CD8-positive, alpha-beta T cell (primary cell): ENCODE measurements at regions of chr11 and their contacts with region 1.

Region 1: DNA sequence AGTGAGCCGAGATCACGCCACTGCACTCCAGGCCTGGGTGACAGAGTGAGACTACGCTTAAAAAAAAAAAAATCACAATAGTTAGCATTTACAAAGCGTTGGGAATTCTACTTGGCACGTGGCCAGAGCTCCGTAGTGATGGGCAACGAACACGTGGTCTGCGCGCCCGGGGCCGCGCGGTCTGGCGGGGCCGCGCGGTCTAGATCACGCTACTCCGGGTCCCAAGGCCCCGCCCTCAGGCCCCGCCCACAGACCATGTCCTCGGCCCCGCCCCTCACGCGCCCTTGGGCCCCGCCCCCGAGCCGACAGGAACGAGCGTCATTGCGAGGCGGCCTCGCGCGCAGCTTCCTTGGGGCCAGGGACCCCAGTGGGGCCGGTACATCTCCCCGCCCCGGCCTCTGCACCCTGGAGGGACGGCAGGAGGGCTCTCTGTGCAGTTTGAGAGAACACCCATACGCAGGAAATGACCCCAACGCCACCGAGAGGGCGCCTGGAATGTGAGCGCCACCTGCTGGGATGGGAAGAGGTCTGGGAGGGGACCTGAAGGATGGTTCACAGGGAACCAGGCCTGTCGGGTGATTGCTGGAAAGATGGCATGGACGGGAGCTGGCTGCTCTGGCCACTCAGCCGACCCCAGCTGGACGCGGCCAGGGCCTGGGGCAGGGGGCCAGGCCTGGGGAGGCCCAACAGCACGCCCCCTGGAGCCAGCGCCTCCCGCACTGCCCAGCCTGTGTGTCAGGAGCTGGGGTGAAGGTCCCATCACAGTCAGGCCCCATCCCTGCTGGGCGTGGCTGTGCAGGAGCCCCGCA is 2.0 kb upstream of the PTDSS2 start:
- DNase-seq: peak; percentile 92 to 97 (median 94)
- ATAC-seq: peak; percentile 74
- H3K4me3 ChIP-seq: peak overlapping the region; percentile 43 to 69
- H3K4me3 Mint-ChIP-seq: peak overlapping the region; percentile 86
- H3K27ac ChIP-seq: peak overlapping the region; percentile 73 to 94
- H3K27ac Mint-ChIP-seq: peak overlapping the region; percentile 94
- H3K4me1 ChIP-seq: peaks cover 29% of the 10 kb centered on the region
- H3K4me1 Mint-ChIP-seq: peaks cover 19% of the 10 kb centered on the region
- H3K27me3 ChIP-seq: peaks cover 0 to 2% of the 10 kb centered on the region in 2 experiments
- H3K27me3 Mint-ChIP-seq: no peaks in the 10 kb centered on the region
- CTCF ChIP-seq: peak; percentile 68

Region 2: GRCh38 chr11:250740-251299 is 197.3 kb before region 1 on chr11:
- CTCF ChIA-PET with region 1: interaction called, 51 read pairs
- POLR2A ChIA-PET with region 1: interaction called, 3 read pairs
- intact Hi-C with region 1: loop called in 1 of 2 experiments (anchors 1 kb)
- DNase-seq: peak; percentile 75 to 89 (median 85)
- ATAC-seq: peak; percentile 99
- H3K4me3 ChIP-seq: no peak overlapping the region
- H3K4me3 Mint-ChIP-seq: peak overlapping the region; percentile 31
- H3K27ac ChIP-seq: peak overlapping the region in 1 of 2 experiments; percentile 10
- H3K27ac Mint-ChIP-seq: peak overlapping the region; percentile 92
- H3K4me1 ChIP-seq: peaks cover 5% of the 10 kb centered on the region
- H3K4me1 Mint-ChIP-seq: peaks cover 15% of the 10 kb centered on the region
- H3K27me3 ChIP-seq: no peaks in the 10 kb centered on the region
- H3K27me3 Mint-ChIP-seq: no peaks in the 10 kb centered on the region
- CTCF ChIP-seq: peak; percentile 77

Region 3: GRCh38 chr11:304915-305843 is 142.9 kb before region 1 on chr11:
- CTCF ChIA-PET with region 1: interaction called, 19 read pairs
- POLR2A ChIA-PET with region 1: interaction called, 3 read pairs
- intact Hi-C with region 1: loop called (anchors 1 to 2 kb)
- DNase-seq: peak in 6 of 9 experiments; percentile 55 to 84 (median 72)
- ATAC-seq: peak; percentile 30
- H3K4me3 ChIP-seq: no peak overlapping the region
- H3K4me3 Mint-ChIP-seq: peak overlapping the region; percentile 5
- H3K27ac ChIP-seq: peak overlapping the region in 1 of 2 experiments; percentile 40
- H3K27ac Mint-ChIP-seq: peak overlapping the region; percentile 43
- H3K4me1 ChIP-seq: peaks cover 59% of the 10 kb centered on the region
- H3K4me1 Mint-ChIP-seq: peaks cover 58% of the 10 kb centered on the region
- H3K27me3 ChIP-seq: no peaks in the 10 kb centered on the region
- H3K27me3 Mint-ChIP-seq: no peaks in the 10 kb centered on the region
- CTCF ChIP-seq: peak; percentile 75

Region 4: DNA sequence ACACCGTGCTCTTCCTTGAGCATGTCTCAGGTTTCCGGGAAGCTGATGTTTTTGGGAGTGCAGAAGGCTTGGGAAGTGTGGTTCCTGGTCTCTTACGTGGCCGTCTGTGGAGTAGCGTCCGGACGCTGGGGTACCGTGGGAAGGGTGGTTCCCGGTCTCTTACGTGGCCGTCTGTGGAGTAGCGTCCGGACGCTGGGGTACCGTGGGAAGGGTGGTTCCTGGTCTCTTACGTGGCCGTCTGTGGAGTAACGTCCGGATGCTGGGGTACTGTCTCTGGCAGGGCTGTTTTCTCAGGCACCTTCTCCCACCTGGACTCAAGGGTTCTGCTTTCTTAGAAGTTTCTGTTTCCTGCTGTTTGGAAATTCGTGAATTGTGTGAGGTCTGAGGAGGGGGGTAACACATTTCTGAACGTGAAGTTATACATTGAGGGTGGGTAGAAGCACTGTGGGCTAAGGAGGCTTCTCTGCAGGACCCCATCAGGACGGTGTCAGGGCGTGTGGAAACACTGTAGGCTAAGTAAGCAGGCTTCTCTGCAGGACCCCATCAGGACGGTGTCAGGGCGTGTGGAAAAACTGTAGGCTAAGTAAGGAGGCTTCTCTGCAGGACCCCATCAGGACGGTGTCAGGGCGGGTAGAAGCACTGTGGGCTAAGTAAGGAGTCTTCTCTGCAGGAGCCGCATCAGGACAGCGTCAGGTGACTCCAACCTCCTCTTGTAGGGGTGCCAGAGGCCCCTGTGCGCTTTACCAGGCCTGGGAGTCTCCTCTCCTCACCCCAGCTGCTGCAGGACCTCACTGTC is 122.1 kb before region 1 on chr11:
- CTCF ChIA-PET with region 1: no interaction called
- POLR2A ChIA-PET with region 1: no interaction called
- intact Hi-C with region 1: no loop called
- DNase-seq: peak in 1 of 9 experiments; percentile 12
- ATAC-seq: peak; percentile 11
- H3K4me3 ChIP-seq: peak overlapping the region; percentile 6 to 9
- H3K4me3 Mint-ChIP-seq: peak overlapping the region; percentile 56
- H3K27ac ChIP-seq: peak overlapping the region; percentile 69 to 81
- H3K27ac Mint-ChIP-seq: peak overlapping the region; percentile 95
- H3K4me1 ChIP-seq: peaks cover 75% of the 10 kb centered on the region
- H3K4me1 Mint-ChIP-seq: peaks cover 66% of the 10 kb centered on the region
- H3K27me3 ChIP-seq: no peaks in the 10 kb centered on the region
- H3K27me3 Mint-ChIP-seq: no peaks in the 10 kb centered on the region
- CTCF ChIP-seq: no peak

Region 5: DNA sequence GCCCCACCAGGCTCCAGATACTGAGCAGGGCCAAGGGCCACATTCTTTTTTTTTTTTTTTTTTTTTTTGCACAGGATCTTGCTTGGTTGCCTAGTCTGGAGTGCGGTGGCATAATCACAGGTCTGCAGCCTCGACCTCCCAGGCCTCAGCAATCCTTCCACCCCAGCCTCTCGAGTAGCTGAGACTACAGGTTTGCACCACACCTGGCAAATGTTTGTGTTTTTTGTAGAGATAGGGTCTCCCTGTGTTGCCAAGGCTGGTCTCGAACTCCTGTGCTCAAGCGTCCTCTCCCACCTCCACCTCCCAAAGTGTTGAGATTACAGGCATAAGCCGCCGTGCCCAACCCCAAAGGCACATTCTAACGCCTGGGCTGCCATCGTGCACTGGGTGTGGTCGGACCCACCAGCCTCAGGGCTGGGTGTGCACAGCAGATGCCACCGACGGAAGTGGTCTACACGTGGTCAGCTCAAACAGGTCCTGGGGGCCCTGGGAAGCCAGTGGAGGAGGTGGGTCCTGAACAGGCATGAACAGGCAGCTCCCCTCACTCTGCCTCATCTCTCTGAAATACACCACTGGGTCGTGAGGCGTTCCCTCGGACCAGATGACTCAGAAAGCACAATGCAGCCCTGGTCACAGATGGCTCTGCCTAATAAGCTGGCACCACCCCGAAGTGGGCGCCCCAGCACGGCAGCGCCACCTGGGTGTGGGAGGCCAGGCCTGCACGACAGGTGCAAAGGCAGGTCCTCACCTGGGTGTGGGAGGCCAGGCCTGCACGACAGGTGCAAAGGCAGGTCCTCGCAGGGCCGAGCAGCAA is 84.0 kb before region 1 on chr11:
- CTCF ChIA-PET with region 1: interaction called, 35 read pairs
- POLR2A ChIA-PET with region 1: no interaction called
- intact Hi-C with region 1: loop called (anchors 2 to 5 kb)
- DNase-seq: peak; percentile 45 to 83 (median 67)
- ATAC-seq: peak; percentile 86
- H3K4me3 ChIP-seq: no peak overlapping the region
- H3K4me3 Mint-ChIP-seq: no peak overlapping the region
- H3K27ac ChIP-seq: peak overlapping the region in 1 of 2 experiments; percentile 21
- H3K27ac Mint-ChIP-seq: no peak overlapping the region
- H3K4me1 ChIP-seq: peaks cover 11% of the 10 kb centered on the region
- H3K4me1 Mint-ChIP-seq: peaks cover 21% of the 10 kb centered on the region
- H3K27me3 ChIP-seq: peaks cover 11 to 17% of the 10 kb centered on the region in 2 experiments
- H3K27me3 Mint-ChIP-seq: peaks cover 27% of the 10 kb centered on the region
- CTCF ChIP-seq: peak; percentile 49

Region 6: GRCh38 chr11:416757-417621 is 31.1 kb before region 1 on chr11:
- CTCF ChIA-PET with region 1: interaction called, 65 read pairs
- POLR2A ChIA-PET with region 1: interaction called, 58 read pairs
- intact Hi-C with region 1: loop called (anchors 1 kb)
- DNase-seq: peak in 7 of 9 experiments; percentile 39 to 77 (median 55)
- ATAC-seq: peak; percentile 11
- H3K4me3 ChIP-seq: peak overlapping the region; percentile 82 to 96
- H3K4me3 Mint-ChIP-seq: peak overlapping the region; percentile 96
- H3K27ac ChIP-seq: peak overlapping the region; percentile 69 to 75
- H3K27ac Mint-ChIP-seq: no peak overlapping the region
- H3K4me1 ChIP-seq: peaks cover 27% of the 10 kb centered on the region
- H3K4me1 Mint-ChIP-seq: peaks cover 27% of the 10 kb centered on the region
- H3K27me3 ChIP-seq: no peaks in the 10 kb centered on the region
- H3K27me3 Mint-ChIP-seq: no peaks in the 10 kb centered on the region
- CTCF ChIP-seq: no peak

Region 7: DNA sequence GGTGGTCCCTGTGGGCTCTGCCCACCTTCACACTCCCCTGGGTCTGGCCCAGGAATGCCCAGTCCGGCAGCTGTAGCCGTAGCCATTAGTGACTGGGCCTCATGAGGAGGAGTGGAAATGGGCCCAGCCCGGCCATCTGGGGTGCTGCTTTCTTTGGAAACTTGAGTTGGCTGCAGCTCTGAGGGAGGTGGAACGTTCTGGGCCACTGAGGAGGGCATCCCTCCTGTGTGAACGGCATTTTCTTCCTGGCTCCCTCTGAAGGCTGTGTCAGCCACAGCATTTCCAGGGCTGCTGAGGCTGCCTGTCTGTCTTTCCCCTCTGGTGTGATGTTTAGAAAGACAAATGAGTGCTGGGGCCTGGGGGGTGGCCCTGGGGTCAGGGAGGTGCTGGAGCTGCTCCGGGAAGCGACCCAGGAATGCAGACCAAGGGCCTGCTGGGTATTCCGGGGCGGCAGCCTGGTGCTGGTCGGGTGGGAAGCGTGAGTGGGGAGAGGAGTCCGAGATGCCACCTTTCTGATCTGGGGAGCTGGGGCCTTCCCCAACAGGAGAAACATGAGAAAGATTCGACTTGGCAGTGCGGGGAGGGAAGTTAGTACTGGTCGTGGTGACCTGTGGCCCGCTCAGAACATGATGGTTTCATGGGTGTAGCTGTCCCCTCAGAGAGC is 29.1 kb after region 1 on chr11:
- CTCF ChIA-PET with region 1: no interaction called
- POLR2A ChIA-PET with region 1: no interaction called
- intact Hi-C with region 1: no loop called
- DNase-seq: no peak
- ATAC-seq: no peak
- H3K4me3 ChIP-seq: no peak overlapping the region
- H3K4me3 Mint-ChIP-seq: no peak overlapping the region
- H3K27ac ChIP-seq: no peak overlapping the region
- H3K27ac Mint-ChIP-seq: no peak overlapping the region
- H3K4me1 ChIP-seq: no peaks in the 10 kb centered on the region
- H3K4me1 Mint-ChIP-seq: no peaks in the 10 kb centered on the region
- H3K27me3 ChIP-seq: no peaks in the 10 kb centered on the region
- H3K27me3 Mint-ChIP-seq: no peaks in the 10 kb centered on the region
- CTCF ChIP-seq: no peak

Region 8: DNA sequence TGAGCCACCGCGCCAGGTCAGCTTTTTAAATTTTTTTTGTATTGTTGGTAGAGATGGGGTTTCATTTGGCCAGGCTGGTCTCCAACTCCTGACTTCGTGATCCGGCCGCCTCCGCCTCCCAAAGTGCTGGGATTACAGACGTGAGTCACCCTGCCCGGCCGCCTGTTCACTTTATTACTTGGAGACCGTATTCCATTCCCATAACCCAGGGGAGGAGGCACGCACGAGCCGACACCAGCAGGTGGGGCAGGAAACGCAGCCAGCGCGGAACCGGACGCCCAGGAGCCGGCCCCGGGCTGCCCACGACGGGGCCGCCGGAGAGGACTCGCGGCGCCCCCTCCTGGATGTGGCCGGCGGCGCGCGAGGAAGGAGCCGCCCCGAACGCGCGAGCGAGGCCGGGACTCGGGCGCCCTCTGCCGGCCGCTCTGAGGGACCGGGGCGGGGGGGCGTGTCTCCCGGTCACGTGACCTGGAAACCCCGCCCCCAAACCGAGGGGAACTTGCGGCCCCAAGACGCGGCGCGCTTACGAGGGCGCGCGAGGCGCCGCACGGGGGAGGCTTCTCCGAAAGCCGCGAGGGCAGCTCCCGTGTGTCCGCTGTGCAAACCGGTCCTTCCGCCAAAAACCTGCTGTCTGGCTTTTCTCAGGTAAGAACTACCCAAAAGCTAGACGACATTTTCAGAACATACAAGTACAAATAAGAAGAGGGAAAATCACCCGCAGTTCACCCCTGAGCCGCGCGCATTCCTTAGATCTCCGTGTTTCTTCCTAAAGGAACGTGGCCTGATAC is 70.5 kb after region 1 on chr11:
- CTCF ChIA-PET with region 1: no interaction called
- POLR2A ChIA-PET with region 1: interaction called, 4 read pairs
- intact Hi-C with region 1: loop called (anchors 1 kb)
- DNase-seq: peak; percentile 82 to 98 (median 92)
- ATAC-seq: peak; percentile 95
- H3K4me3 ChIP-seq: peak overlapping the region; percentile 43 to 46
- H3K4me3 Mint-ChIP-seq: peak overlapping the region; percentile 79
- H3K27ac ChIP-seq: peak overlapping the region in 1 of 2 experiments; percentile 59
- H3K27ac Mint-ChIP-seq: peak overlapping the region; percentile 81
- H3K4me1 ChIP-seq: peaks cover 4% of the 10 kb centered on the region
- H3K4me1 Mint-ChIP-seq: peaks cover 5% of the 10 kb centered on the region
- H3K27me3 ChIP-seq: no peaks in the 10 kb centered on the region
- H3K27me3 Mint-ChIP-seq: no peaks in the 10 kb centered on the region
- CTCF ChIP-seq: peak; percentile 99